ENCODE measurements at regions of chr12 and their contacts with region 1.

Region 1: GRCh38 chr12:6295094-6295811 is 15.2 kb upstream of the PLEKHG6 start:
- DNase-seq: peak; percentile 95 to 99
- H3K4me3 ChIP-seq: no peak overlapping the region; the same call in 1 of the 2 replicates
- H3K27ac ChIP-seq: peak overlapping the region; percentile 91
- H3K4me1 ChIP-seq: peaks cover 64% of the 10 kb centered on the region
- H3K27me3 ChIP-seq: no peaks in the 10 kb centered on the region
- CTCF ChIP-seq: no peak

Region 2: GRCh38 chr12:5716976-5717375 is 578.3 kb before region 1 on chr12:
- CTCF ChIA-PET with region 1: interaction called, 11 read pairs
- POLR2A ChIA-PET with region 1: no interaction called
- intact Hi-C with region 1: no loop called
- DNase-seq: no peak
- H3K4me3 ChIP-seq: no peak overlapping the region
- H3K27ac ChIP-seq: no peak overlapping the region
- H3K4me1 ChIP-seq: no peaks in the 10 kb centered on the region
- H3K27me3 ChIP-seq: peaks cover 87% of the 10 kb centered on the region
- CTCF ChIP-seq: no peak

Region 3: GRCh38 chr12:6056406-6057240 is 238.6 kb before region 1 on chr12:
- CTCF ChIA-PET with region 1: no interaction called
- POLR2A ChIA-PET with region 1: interaction called, 16 read pairs
- intact Hi-C with region 1: no loop called
- DNase-seq: no peak
- H3K4me3 ChIP-seq: no peak overlapping the region
- H3K27ac ChIP-seq: no peak overlapping the region
- H3K4me1 ChIP-seq: peaks cover 7% of the 10 kb centered on the region; the same call in 1 of the 2 replicates
- H3K27me3 ChIP-seq: no peaks in the 10 kb centered on the region
- CTCF ChIP-seq: no peak; the same call in 1 of the 2 replicates

Region 4: DNA sequence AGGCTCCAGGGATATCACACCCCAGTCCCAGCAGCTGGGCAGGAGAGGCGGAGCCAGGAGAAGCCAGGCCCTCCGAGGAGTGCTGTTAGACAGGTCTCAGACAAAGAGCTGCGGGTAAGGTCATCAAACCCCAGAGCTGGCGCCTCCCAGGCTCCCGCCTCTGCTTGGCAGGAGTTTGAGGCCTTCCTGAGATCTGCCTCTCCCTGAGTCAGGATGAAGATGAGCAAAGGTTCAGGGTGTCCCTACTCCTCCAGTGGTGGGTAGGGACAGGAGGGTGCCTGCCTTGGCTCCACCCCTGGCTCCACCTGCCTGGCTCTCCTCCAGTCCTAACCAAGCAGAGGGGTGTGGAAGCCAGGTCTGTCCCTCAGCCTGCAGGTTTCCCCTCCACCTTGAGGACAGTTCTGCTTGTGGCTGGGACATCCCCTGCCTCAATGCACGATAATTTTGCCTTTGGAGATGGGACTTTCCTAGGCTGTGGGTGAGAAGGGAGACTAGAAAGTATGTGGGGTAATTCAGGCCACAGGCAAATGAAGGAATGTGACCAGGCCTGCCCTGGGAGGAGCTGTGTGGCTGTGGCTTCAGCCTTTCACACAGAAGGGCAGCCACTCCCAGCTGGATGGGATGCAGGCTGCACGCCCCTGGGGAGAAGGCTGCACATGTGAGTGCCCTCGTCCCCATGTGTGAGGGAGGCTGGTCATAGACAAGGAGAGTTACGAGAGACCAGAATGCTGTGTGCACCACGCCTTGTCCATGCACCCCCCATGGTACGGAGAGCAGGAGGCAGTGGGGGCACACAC is 17.5 kb after region 1 on chr12:
- CTCF ChIA-PET with region 1: interaction called, 3 read pairs
- POLR2A ChIA-PET with region 1: interaction called, 27 read pairs
- intact Hi-C with region 1: loop called (anchors 1 kb)
- DNase-seq: peak; percentile 96
- H3K4me3 ChIP-seq: peak overlapping the region; percentile 33; the same call in 1 of the 2 replicates
- H3K27ac ChIP-seq: peak overlapping the region; percentile 97
- H3K4me1 ChIP-seq: peaks cover 54% of the 10 kb centered on the region
- H3K27me3 ChIP-seq: no peaks in the 10 kb centered on the region
- CTCF ChIP-seq: no peak

Region 5: DNA sequence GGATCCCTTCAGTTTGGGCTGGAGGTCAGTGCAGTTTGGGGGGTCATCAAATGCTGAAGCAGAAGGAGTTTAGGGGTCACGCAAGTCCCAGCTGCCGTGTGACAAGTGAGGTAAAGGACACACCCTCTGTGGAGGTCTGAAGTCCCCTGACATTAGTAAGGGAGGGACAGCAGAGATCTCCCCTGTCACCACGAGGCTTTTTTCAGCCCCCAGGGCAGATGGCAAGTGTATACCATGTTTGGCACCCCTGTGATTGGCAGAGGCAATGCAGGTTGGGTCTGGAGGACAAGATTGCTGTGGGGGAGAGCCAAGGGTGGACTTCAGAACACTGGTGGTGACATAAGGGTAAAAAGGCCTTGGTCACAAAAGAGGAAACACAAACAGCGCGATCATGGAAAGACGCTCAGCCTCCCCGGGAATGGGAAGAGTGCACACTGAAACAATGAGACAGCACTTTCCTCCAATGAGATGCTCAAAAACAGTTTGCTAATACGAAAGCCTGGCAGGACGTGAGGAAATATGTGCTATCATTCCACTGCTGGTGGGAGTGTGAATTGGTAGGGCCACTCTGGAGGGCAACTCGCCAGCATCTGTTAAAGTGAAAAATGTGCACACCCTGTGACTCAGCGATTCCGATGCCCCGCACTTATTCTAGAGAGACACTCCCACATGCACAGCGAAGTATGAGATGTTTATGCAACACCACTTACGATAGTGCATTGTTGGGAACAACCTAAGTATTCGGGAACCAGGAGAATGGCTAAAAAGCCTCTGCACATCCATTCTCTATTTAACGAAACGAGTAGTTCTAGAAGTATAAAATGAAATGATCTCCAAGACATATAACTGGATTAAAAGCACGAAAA is 135.1 kb after region 1 on chr12:
- CTCF ChIA-PET with region 1: no interaction called
- POLR2A ChIA-PET with region 1: no interaction called
- intact Hi-C with region 1: no loop called
- DNase-seq: peak; percentile 97 to 98
- H3K4me3 ChIP-seq: peak overlapping the region; percentile 37
- H3K27ac ChIP-seq: peak overlapping the region; percentile 98
- H3K4me1 ChIP-seq: peaks cover 29% of the 10 kb centered on the region
- H3K27me3 ChIP-seq: no peaks in the 10 kb centered on the region
- CTCF ChIP-seq: no peak

Measured in PC-9 (cell line).